GM12878 (cell line): ENCODE measurements at regions of chr11 and their contacts with region 1.

Region 1: GRCh38 chr11:73085189-73085875 is 56.8 kb downstream of the FCHSD2 start:
- DNase-seq: no peak
- ATAC-seq: peak; percentile 54
- H3K4me3 ChIP-seq: no peak overlapping the region
- H3K27ac ChIP-seq: peak overlapping the region; percentile 4; the same call in 1 of the 2 replicates
- H3K4me1 ChIP-seq: peaks cover 27% of the 10 kb centered on the region
- H3K27me3 ChIP-seq: no peaks in the 10 kb centered on the region
- CTCF ChIP-seq: no peak
- EP300 ChIP-seq: no peak
- POLR2A ChIP-seq: no peak
- RAD21 ChIP-seq: no peak

Region 2: GRCh38 chr11:72899238-72899637 is 186.1 kb before region 1 on chr11:
- CTCF ChIA-PET with region 1: no interaction called
- POLR2A ChIA-PET with region 1: no interaction called
- RAD21 ChIA-PET with region 1: no interaction called
- SMC1A ChIA-PET with region 1: no interaction called
- in situ Hi-C with region 1: no loop called
- intact Hi-C with region 1: no loop called
- DNase-seq: no peak
- ATAC-seq: no peak
- H3K4me3 ChIP-seq: no peak overlapping the region
- H3K27ac ChIP-seq: no peak overlapping the region
- H3K4me1 ChIP-seq: no peaks in the 10 kb centered on the region
- H3K27me3 ChIP-seq: no peaks in the 10 kb centered on the region
- CTCF ChIP-seq: no peak
- EP300 ChIP-seq: no peak
- POLR2A ChIP-seq: no peak
- RAD21 ChIP-seq: no peak

Region 3: DNA sequence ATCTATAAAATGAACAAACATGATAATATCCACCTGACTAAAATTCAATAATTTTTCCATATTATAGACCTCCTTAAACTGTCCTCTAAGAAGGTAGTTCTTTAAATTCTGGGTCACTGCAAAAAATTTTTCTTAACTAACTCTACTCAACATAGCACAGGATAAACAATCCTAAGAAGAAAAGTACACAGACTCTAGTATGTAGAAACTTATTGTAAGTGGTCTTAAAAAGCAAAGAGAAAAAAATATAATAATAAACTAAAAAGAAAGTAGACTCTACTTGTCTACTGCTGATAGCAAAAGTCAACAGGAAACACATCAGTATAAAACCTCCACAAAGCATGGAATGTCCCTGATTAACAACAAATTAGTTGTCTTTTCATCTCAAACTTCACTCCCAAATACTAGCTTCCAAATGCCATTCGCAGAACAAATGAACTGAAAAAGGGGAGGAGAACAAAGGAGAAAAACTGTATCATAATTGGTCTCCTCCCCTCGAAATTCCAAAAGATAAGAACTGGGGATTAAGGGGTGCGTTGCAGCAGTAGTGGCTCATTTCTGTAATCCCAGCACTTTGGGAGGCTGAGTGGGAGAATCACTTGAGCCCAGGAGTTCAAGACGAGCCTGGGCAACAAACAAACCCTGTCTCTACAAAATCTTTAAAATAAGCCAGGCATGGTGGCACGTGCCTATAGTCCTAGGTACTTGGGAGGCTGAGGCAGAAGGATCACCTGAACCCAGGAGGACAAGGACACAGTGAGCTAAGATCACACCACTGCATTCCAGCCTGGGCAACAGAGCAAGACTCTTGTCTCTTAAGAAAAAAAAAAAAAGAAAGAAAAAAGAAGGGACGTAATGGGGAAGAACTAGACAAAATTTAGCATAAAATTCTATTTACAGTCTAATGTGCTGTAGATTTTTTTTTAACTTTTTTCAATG is 50.3 kb after region 1 on chr11:
- CTCF ChIA-PET with region 1: no interaction called
- POLR2A ChIA-PET with region 1: no interaction called
- RAD21 ChIA-PET with region 1: interaction called, 3 read pairs
- SMC1A ChIA-PET with region 1: interaction called, 12 read pairs
- in situ Hi-C with region 1: no loop called
- intact Hi-C with region 1: loop called (anchors 5 kb)
- DNase-seq: no peak
- ATAC-seq: no peak
- H3K4me3 ChIP-seq: peak overlapping the region; percentile 26; the same call in 1 of the 2 replicates
- H3K27ac ChIP-seq: no peak overlapping the region
- H3K4me1 ChIP-seq: peaks cover 6% of the 10 kb centered on the region; the same call in 1 of the 2 replicates
- H3K27me3 ChIP-seq: no peaks in the 10 kb centered on the region
- CTCF ChIP-seq: no peak
- EP300 ChIP-seq: no peak
- POLR2A ChIP-seq: no peak
- RAD21 ChIP-seq: no peak

Region 4: DNA sequence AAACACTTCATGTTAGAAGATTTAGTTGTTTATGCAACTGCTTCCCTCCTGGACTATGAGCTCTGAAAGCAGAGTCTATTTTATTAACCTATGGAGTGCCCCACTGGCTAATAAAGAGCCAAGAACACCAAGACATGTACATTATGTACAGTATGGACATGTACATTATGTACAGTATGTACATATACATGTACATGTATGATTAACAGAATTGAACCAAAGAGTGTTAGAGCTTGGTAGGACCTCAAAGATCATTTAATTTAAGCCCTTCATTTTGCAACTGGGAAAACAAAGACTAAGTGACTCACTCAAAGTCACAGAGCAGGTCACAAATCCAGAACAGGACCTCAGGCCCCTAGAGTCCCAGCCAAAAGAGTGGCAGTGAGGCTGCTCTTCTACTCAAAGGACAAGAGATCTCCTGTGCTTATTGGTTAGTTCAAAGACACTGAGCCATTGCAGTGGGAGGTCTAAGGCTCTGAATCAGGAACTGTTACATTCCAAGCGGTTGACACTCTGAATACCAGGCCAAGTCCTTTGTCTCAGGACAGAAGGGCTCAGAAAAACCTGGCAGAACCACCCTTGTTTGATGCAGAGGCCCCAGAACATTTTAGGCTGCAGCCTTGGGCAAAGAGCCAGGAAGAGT is 408.7 kb after region 1 on chr11:
- CTCF ChIA-PET with region 1: no interaction called
- POLR2A ChIA-PET with region 1: no interaction called
- RAD21 ChIA-PET with region 1: no interaction called
- SMC1A ChIA-PET with region 1: no interaction called
- in situ Hi-C with region 1: no loop called
- intact Hi-C with region 1: no loop called
- DNase-seq: no peak
- ATAC-seq: no peak
- H3K4me3 ChIP-seq: no peak overlapping the region
- H3K27ac ChIP-seq: no peak overlapping the region
- H3K4me1 ChIP-seq: no peaks in the 10 kb centered on the region
- H3K27me3 ChIP-seq: no peaks in the 10 kb centered on the region
- CTCF ChIP-seq: no peak
- EP300 ChIP-seq: no peak
- POLR2A ChIP-seq: no peak
- RAD21 ChIP-seq: no peak